Activated CD8-positive, alpha-beta memory T cell treated with anti-CD3 and anti-CD28 coated beads, Interleukin-2, amount 10 ng/mL, durations not matched to agents 7 days and 5 days (primary cell): ENCODE measurements at regions of chr12 and their contacts with region 1.

Region 1: GRCh38 chr12:14257734-14258574 is 107.5 kb upstream of the ATF7IP start:
- DNase-seq: peak; percentile 98
- ATAC-seq: peak; percentile 82
- H3K4me3 Mint-ChIP-seq: peak overlapping the region; percentile 71
- H3K27ac Mint-ChIP-seq: peak overlapping the region; percentile 100
- H3K4me1 Mint-ChIP-seq: peaks cover 46% of the 10 kb centered on the region
- H3K27me3 Mint-ChIP-seq: no peaks in the 10 kb centered on the region

Region 2: DNA sequence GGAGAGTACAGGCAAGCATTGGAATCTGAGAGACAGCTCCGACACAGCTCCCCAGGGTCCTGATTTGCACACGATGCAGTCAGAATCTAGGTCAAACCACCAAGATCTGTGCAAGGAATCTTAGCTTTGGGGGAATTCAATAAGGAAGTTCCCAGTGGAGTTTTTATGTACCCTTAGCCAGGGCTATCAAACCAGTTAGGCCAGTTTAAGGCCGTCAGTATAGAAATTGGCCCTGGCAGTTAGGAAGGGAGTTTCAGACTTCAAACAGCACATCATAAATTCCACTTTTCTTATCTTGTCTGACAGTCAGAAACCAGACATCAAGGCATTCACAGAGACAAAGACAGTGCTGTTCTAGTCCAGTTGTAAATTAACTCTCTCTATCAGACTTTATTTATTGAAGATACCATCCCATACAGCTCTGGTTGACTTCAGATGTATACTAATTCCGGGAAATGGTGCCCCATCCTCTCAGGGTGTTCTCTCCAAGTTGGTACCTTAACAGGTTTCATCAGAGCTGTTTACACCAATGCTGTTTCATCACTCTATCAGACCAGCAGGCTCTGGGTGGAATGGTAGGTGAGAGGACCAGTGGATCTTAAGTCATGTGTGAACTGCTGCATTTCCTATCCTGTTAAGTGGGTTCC is 49.9 kb before region 1 on chr12:
- CTCF ChIA-PET with region 1: no interaction called
- DNase-seq: no peak
- ATAC-seq: no peak
- H3K4me3 Mint-ChIP-seq: no peak overlapping the region
- H3K27ac Mint-ChIP-seq: no peak overlapping the region
- H3K4me1 Mint-ChIP-seq: no peaks in the 10 kb centered on the region
- H3K27me3 Mint-ChIP-seq: no peaks in the 10 kb centered on the region

Region 3: DNA sequence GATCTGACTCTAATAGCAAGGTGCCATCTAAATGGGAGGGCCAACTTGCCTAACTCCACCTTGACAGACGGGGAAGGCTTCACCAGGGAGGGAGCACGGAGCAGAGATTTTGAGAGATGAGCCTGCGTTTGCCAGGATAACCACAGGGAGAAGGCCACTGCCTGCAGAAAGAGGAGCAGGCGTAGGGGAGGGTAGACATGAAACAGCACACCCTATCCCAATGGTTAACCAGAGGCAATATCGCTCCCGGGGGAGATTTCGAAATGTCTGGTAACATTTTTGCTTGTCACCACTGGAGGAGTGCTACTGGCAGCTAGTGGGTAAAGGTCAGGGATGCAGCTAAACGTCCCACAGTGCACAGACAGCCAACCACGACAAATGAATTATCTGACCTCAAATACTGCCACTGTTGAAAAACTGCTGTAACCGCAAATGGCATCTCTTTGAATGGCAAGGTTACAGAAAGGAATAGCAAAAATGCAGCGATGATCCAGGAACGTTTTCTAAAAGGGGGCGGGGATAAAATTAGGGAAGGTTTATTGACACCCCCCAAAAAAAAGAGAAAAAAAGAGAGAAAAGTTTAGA is 18.5 kb before region 1 on chr12:
- CTCF ChIA-PET with region 1: interaction called, 38 read pairs
- DNase-seq: peak; percentile 50
- ATAC-seq: peak; percentile 59
- H3K4me3 Mint-ChIP-seq: peak overlapping the region; percentile 66
- H3K27ac Mint-ChIP-seq: peak overlapping the region; percentile 78
- H3K4me1 Mint-ChIP-seq: peaks cover 22% of the 10 kb centered on the region
- H3K27me3 Mint-ChIP-seq: no peaks in the 10 kb centered on the region

Region 4: DNA sequence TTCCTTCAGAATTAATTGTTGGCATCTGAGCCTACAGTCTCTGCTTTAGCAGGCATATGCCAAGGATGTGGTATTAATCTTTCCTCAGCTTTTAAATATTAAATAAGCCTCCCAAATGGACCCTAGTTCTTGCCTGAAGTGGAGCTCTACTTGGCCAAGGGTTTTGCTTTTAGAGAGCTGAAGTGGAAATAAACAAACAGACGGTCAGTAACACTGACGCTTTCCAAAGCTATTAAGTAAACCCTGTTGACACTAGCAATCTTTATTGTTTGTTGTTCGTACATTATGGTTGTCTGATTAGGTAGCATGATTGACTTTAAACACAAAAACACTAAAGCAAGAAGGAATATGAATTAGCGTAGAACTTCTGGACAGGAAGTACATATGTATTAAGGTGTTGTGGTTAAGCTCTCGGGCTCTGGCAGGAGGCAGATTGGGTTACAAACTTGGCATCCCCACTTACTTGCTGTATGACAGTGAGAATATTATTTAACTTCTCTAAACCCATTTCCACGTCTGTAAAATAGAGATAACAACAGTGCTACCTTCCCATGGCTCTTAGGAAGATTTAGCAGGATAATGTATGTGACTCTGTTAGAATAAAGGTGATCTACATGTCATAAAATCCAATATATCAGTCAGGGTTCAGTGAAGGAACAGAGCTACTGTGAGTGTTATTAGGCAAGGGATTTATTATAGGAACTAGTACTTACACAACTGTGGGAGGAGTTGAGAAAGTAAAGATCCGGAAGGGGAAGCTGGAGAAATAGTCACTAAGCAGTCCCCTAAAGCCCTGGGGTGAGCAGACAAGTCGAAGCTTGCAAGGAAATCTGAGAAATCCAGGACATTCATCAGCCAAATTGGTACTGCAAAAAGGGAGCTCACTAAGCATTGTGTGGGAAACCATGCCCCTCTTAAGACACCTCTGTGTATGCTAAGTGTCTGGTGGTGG is 15.3 kb after region 1 on chr12:
- CTCF ChIA-PET with region 1: interaction called, 14 read pairs
- DNase-seq: no peak
- ATAC-seq: no peak
- H3K4me3 Mint-ChIP-seq: no peak overlapping the region
- H3K27ac Mint-ChIP-seq: no peak overlapping the region
- H3K4me1 Mint-ChIP-seq: peaks cover 15% of the 10 kb centered on the region
- H3K27me3 Mint-ChIP-seq: no peaks in the 10 kb centered on the region

Region 5: DNA sequence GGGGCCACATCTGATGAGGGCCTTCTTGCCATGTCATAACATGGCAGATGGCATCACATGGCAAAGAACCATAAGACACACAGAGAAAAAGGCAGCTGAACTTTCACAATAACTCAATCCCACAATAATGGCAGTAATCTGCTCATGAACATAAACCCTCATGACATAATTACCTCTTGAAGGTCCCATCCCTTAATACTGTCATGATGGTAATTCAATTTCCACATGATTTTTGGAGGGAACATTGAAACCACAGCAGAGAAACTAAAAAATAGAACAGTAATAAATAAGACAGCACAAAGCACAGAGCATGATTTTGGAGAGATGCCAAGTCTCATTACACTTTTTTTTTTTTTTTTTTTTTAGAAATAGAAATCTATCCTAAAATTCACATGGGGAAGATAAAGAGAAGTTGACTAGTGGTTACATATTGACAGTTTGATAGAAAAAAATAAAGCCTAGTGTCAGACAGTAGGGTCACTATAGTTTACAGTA is 45.8 kb after region 1 on chr12:
- CTCF ChIA-PET with region 1: no interaction called
- DNase-seq: no peak
- ATAC-seq: no peak
- H3K4me3 Mint-ChIP-seq: no peak overlapping the region
- H3K27ac Mint-ChIP-seq: no peak overlapping the region
- H3K4me1 Mint-ChIP-seq: no peaks in the 10 kb centered on the region
- H3K27me3 Mint-ChIP-seq: no peaks in the 10 kb centered on the region

Region 6: GRCh38 chr12:14394317-14395073 is 136.5 kb after region 1 on chr12:
- CTCF ChIA-PET with region 1: interaction called, 18 read pairs
- DNase-seq: peak; percentile 76
- ATAC-seq: peak; percentile 73
- H3K4me3 Mint-ChIP-seq: peak overlapping the region; percentile 74
- H3K27ac Mint-ChIP-seq: peak overlapping the region; percentile 94
- H3K4me1 Mint-ChIP-seq: peaks cover 70% of the 10 kb centered on the region
- H3K27me3 Mint-ChIP-seq: no peaks in the 10 kb centered on the region

Region 7: GRCh38 chr12:14664510-14664909 is 406.6 kb after region 1 on chr12:
- CTCF ChIA-PET with region 1: no interaction called
- DNase-seq: no peak
- ATAC-seq: peak; percentile 51
- H3K4me3 Mint-ChIP-seq: no peak overlapping the region
- H3K27ac Mint-ChIP-seq: no peak overlapping the region
- H3K4me1 Mint-ChIP-seq: peaks cover 11% of the 10 kb centered on the region
- H3K27me3 Mint-ChIP-seq: peaks cover 7% of the 10 kb centered on the region